ENCODE measurements at regions of chr20 and their contacts with region 1.

Region 1: DNA sequence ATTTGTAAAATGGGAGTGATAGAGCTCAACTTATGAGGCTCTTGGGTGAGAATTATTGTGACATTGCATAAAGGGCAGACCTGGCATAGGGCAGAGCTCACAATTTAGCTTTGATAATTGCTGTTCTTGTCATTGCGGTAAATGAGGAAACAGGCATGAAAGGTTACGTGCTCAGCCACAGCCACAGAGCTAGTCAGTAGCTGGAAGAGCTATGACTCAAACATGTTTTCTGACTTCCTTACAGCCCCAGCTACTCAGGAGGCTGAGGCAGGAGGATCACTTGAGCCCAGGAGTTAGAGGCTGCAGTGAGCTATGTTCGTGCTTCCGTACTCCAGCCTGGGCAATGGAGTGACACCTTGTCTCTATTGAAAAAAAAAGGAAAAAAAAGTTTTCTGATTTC is 3.5 kb upstream of the GHRH start:
- DNase-seq: peak; percentile 57
- CTCF ChIP-seq: no peak

Region 2: GRCh38 chr20:37534401-37535157 is 269.4 kb after region 1 on chr20:
- in situ Hi-C with region 1: loop called (anchors 5 kb)
- DNase-seq: peak; percentile 77
- CTCF ChIP-seq: peak; percentile 74